Natural killer cell (primary cell): ENCODE measurements at regions of chr3 and their contacts with region 1.

Region 1: GRCh38 chr3:119676771-119677640 is at the start of gene COX17:
- DNase-seq: peak; percentile 91 to 99
- ATAC-seq: peak; percentile 86 to 92 (median 89)
- H3K4me3 ChIP-seq: peak within 1 kb of the TSS; percentile 60
- H3K4me3 Mint-ChIP-seq: peak within 1 kb of the TSS; percentile 95
- H3K27ac ChIP-seq: peak within 1 kb of the TSS; percentile 93
- H3K27ac Mint-ChIP-seq: peak within 1 kb of the TSS; percentile 97 to 99
- H3K4me1 ChIP-seq: no peaks in the 10 kb centered on the region
- H3K4me1 Mint-ChIP-seq: peaks cover 30 to 31% of the 10 kb centered on the region in 2 donors
- H3K27me3 ChIP-seq: no peaks in the 10 kb centered on the region
- H3K27me3 Mint-ChIP-seq: no peaks in the 10 kb centered on the region
- CTCF ChIP-seq: no peak
- total RNA-seq, gene COX17: 35.6 to 44.8 (median 40.6) TPM

Region 2: DNA sequence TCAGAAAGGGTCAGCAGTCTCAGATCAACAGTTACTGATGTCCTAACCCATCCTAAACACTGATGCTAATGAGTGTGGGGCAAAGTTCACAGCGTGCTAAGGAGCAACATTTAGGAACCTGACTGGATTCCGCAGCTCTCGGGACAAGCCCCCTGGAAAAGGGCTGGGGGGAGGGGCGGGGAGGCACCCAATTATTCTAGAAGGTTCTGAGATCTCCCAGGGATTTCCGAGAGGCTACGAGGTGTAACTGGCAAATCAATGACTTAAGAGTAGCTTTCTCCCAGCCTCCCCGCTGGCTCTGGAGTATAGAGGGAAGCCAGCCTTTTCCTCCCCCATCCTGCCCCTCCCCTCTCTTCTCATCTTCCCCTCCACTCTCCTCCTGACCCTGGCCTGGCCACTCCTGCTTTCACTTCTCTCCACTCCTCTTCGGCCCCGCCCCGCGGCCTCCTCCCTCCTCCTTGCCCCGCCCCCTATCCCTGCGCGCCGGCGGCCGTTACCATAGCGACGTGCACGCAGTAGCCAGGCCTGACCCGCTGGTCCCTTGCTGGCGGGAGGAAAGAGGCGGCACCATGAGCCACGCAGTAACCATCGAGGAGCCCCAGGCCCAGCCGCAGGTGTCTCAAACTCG is 25.6 kb after region 1 on chr3 and contains the start of gene CFAP91:
- intact Hi-C with region 1: loop called (anchors 1 kb)
- DNase-seq: peak; percentile 81 to 86
- ATAC-seq: peak; percentile 95 to 97 (median 97)
- H3K4me3 ChIP-seq: peak within 1 kb of the TSS; percentile 45
- H3K4me3 Mint-ChIP-seq: peak within 1 kb of the TSS; percentile 83
- H3K27ac ChIP-seq: no peak within 1 kb of the TSS
- H3K27ac Mint-ChIP-seq: peak within 1 kb of the TSS in 1 of 2 donors; percentile 83
- H3K4me1 ChIP-seq: peaks cover 25% of the 10 kb centered on the region
- H3K4me1 Mint-ChIP-seq: peaks cover 26 to 27% of the 10 kb centered on the region in 2 donors
- H3K27me3 ChIP-seq: peaks cover 6% of the 10 kb centered on the region
- H3K27me3 Mint-ChIP-seq: peaks cover 6 to 7% of the 10 kb centered on the region in 2 donors
- CTCF ChIP-seq: no peak
- total RNA-seq, gene CFAP91: 0.14 TPM in 1 of 3 donors, not detected in the others

Region 3: GRCh38 chr3:119794971-119795612 is 118.1 kb after region 1 on chr3:
- intact Hi-C with region 1: no loop called
- DNase-seq: no peak
- ATAC-seq: no peak
- H3K4me3 ChIP-seq: no peak overlapping the region
- H3K4me3 Mint-ChIP-seq: no peak overlapping the region
- H3K27ac ChIP-seq: no peak overlapping the region
- H3K27ac Mint-ChIP-seq: no peak overlapping the region
- H3K4me1 ChIP-seq: no peaks in the 10 kb centered on the region
- H3K4me1 Mint-ChIP-seq: no peaks in the 10 kb centered on the region
- H3K27me3 ChIP-seq: no peaks in the 10 kb centered on the region
- H3K27me3 Mint-ChIP-seq: peaks cover 9 to 14% of the 10 kb centered on the region in 2 donors
- CTCF ChIP-seq: no peak